K562 (cell line): ENCODE measurements at regions of chr1 and their contacts with region 1.

Region 1: GRCh38 chr1:15741183-15741850 is 982 bp upstream of the TMEM82 start:
- DNase-seq: peak; percentile 88 to 94 (median 91)
- ATAC-seq: peak; percentile 97
- H3K4me3 ChIP-seq: no peak overlapping the region
- H3K27ac ChIP-seq: no peak overlapping the region
- H3K4me1 ChIP-seq: peaks cover 3 to 55% of the 10 kb centered on the region in 2 experiments; a peak in 4 of 5 replicates
- H3K27me3 ChIP-seq: no peaks in the 10 kb centered on the region
- CTCF ChIP-seq: peak; percentile 96 to 98 (median 97)
- EP300 ChIP-seq: no peak
- POLR2A ChIP-seq: no peak
- RAD21 ChIP-seq: peak; percentile 88 to 97

Region 2: GRCh38 chr1:15595809-15596617 is 145.3 kb before region 1 on chr1:
- CTCF ChIA-PET with region 1: interaction called, 15 read pairs
- POLR2A ChIA-PET with region 1: no interaction called
- in situ Hi-C with region 1: no loop called
- intact Hi-C with region 1: loop called (anchors 1 kb)
- DNase-seq: no peak
- ATAC-seq: no peak
- H3K4me3 ChIP-seq: no peak overlapping the region
- H3K27ac ChIP-seq: no peak overlapping the region
- H3K4me1 ChIP-seq: peaks cover 0 to 4% of the 10 kb centered on the region in 2 experiments; a peak in 2 of 5 replicates
- H3K27me3 ChIP-seq: no peaks in the 10 kb centered on the region
- CTCF ChIP-seq: no peak
- EP300 ChIP-seq: no peak
- POLR2A ChIP-seq: no peak
- RAD21 ChIP-seq: no peak

Region 3: GRCh38 chr1:16101623-16102022 is 360.3 kb after region 1 on chr1:
- CTCF ChIA-PET with region 1: no interaction called
- POLR2A ChIA-PET with region 1: no interaction called
- in situ Hi-C with region 1: no loop called
- intact Hi-C with region 1: no loop called
- DNase-seq: no peak
- ATAC-seq: no peak
- H3K4me3 ChIP-seq: no peak overlapping the region
- H3K27ac ChIP-seq: no peak overlapping the region
- H3K4me1 ChIP-seq: no peaks in the 10 kb centered on the region
- H3K27me3 ChIP-seq: peaks cover 1 to 3% of the 10 kb centered on the region in 2 experiments; a peak in 3 of 5 replicates
- CTCF ChIP-seq: no peak
- EP300 ChIP-seq: no peak
- POLR2A ChIP-seq: no peak
- RAD21 ChIP-seq: no peak